Heart right ventricle (tissue), 16 donors: ENCODE measurements at regions of chr3 and their contacts with region 1.

Region 1: DNA sequence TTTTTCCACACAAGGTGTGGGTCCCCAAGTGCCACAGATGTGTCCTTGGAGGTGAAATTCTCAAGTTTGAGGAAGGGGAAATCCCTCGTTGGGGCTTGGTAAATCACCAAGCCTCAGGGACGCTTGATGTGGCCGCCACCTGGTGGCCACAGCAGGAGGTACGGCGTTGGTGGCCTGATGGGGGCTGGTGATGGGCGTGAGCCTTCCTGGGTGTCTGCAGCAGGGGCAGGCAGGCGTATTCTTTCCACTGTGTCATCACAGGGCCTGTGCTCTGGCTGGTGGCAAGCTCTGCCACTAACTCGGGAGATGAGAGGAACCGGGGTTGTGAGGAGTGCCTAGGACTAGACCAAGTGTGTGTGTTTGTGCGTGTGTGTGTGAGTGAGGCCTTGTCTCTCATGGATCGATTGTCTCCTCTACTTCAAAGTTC is 4.2 kb downstream of the ACOX2 start:
- DNase-seq: peak; percentile 51 to 75
- ATAC-seq: peak; percentile 40 to 61 (median 50)
- H3K4me3 ChIP-seq: no peak overlapping the region
- H3K27ac ChIP-seq: no peak overlapping the region
- H3K4me1 ChIP-seq: peaks cover 14 to 51% (median 39%) of the 10 kb centered on the region in 9 donors
- H3K27me3 ChIP-seq: no peaks in the 10 kb centered on the region
- CTCF ChIP-seq: peak; percentile 78 to 95 (median 91)

Region 2: GRCh38 chr3:58305882-58306711 is 226.7 kb before region 1 on chr3 and contains the starts of genes HTD2 and RPP14:
- intact Hi-C with region 1: loop called in 3 of 10 experiments (anchors 5 to 10 kb)
- DNase-seq: peak; percentile 98 to 99
- ATAC-seq: peak; percentile 95 to 98 (median 96)
- H3K4me3 ChIP-seq: peak within 1 kb of the TSS; percentile 73 to 93 (median 87)
- H3K27ac ChIP-seq: peak within 1 kb of the TSS; percentile 95 to 99 (median 97)
- H3K4me1 ChIP-seq: peaks cover 0 to 40% (median 32%) of the 10 kb centered on the region in 9 donors
- H3K27me3 ChIP-seq: no peaks in the 10 kb centered on the region
- CTCF ChIP-seq: peak; percentile 94 to 99 (median 98)
- total RNA-seq, gene HTD2: 11.2 to 19.5 (median 13.1) TPM
- total RNA-seq, gene RPP14: 19.9 to 34.4 (median 24.3) TPM

Region 3: DNA sequence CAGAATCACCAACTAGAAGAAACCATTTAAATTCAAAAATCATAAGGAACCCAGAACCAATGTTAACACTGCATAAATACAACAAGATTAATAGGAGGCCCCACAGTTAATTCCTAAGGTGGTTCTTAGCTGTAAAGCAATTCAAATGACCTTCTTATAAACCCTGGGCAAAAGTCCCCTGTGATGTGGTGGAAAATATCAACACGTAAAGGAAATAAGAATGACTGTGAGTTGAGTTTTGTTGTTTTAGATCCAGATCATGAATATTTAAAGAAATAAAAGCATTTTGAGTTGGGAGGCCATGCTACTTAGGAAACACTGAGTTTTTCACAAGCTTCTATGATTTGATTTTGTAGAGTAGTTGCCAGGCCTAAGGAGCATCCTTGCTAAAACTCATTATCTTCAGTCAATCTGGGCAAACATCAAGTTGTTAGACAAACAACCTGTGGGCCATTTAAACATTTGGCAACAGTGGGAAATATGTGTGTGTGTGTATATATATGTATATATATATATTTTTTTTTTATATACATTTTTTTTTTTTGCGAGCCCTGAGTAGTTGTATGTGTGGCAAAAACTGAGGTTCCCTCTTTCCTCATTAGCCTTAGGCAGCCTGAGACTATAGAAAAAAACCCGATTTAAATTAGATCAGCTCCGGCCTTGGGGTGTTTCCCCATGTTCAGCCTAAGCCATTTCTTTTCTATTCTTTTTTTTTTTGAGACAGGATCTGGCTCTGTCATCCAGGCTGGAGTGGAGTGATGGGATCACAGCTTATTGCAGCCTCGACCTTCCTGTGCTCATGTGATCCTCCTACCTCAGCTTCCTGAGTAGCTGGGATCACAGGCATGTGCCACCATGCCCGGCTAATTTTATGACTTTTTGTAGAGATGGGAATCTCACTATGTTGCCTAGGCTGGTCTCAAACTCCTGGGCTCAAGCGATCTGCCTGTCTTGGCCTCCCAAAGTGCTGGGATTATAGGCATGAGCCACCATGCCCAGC is 208.1 kb before region 1 on chr3:
- intact Hi-C with region 1: loop called in 6 of 10 experiments (anchors 5 to 10 kb)
- DNase-seq: no peak
- ATAC-seq: no peak
- H3K4me3 ChIP-seq: no peak overlapping the region
- H3K27ac ChIP-seq: peak overlapping the region in 7 of 10 donors; percentile 16 to 72 (median 36)
- H3K4me1 ChIP-seq: peaks cover 0 to 25% (median 14%) of the 10 kb centered on the region in 9 donors
- H3K27me3 ChIP-seq: no peaks in the 10 kb centered on the region
- CTCF ChIP-seq: no peak

Region 4: GRCh38 chr3:58419780-58420507 is 112.9 kb before region 1 on chr3:
- intact Hi-C with region 1: loop called in 2 of 10 experiments (anchors 5 to 10 kb)
- DNase-seq: peak; percentile 45 to 65
- ATAC-seq: peak; percentile 69 to 95 (median 80)
- H3K4me3 ChIP-seq: no peak overlapping the region
- H3K27ac ChIP-seq: peak overlapping the region; percentile 46 to 89 (median 76)
- H3K4me1 ChIP-seq: peaks cover 0 to 52% (median 24%) of the 10 kb centered on the region in 9 donors
- H3K27me3 ChIP-seq: no peaks in the 10 kb centered on the region
- CTCF ChIP-seq: peak in 1 of 9 donors; percentile 17

Region 5: DNA sequence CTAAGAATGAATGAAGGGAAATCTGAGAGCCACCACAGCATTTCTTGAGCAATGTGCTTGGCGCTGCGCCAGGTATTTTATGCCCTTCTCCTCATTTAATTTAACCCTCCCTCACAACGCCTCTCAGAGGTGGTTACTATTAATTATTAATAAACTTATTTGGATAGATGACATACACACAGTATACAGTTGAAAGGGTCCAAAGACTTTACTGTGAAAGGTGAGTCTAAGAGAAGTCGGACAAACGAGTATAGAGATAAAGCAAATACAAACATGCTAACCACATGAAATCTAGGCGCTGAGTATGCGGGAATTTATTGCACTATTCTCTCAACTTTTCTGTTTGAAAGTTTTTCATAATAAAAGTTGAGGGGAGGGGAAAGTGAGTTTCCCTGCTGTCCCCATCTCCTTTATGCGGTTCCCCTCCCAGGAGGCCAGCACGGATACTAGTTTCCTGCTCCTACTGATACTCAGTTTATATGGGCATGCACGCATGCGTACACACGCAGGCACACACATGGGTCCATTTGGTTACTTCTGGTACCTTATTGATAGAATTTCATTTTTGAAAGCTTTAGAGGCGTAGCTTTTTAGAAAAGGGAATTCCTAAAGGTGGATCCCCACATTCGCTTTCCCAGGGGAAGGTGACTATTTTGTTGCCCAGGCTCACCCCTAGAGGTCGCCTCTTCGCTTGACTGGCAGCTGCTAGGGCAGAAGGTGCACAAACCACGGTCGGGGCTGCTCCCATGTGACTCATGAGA is 69.4 kb before region 1 on chr3:
- intact Hi-C with region 1: loop called in 5 of 10 experiments (anchors 2 to 5 kb)
- DNase-seq: peak; percentile 63 to 68
- ATAC-seq: peak; percentile 80 to 96 (median 88)
- H3K4me3 ChIP-seq: peak overlapping the region in 8 of 10 donors; percentile 1 to 41 (median 26)
- H3K27ac ChIP-seq: no peak overlapping the region
- H3K4me1 ChIP-seq: peaks cover 0 to 16% (median 4%) of the 10 kb centered on the region in 9 donors
- H3K27me3 ChIP-seq: no peaks in the 10 kb centered on the region
- CTCF ChIP-seq: peak; percentile 57 to 93 (median 78)